ENCODE measurements at regions of chr4 and their contacts with region 1.

Region 1: GRCh38 chr4:181528570-181529184 is 714.5 kb upstream of the TENM3 start:
- DNase-seq: peak; percentile 43 to 71
- ATAC-seq: peak; percentile 64 to 81 (median 66)
- H3K4me3 ChIP-seq: no peak overlapping the region
- H3K27ac ChIP-seq: no peak overlapping the region
- H3K4me1 ChIP-seq: no peaks in the 10 kb centered on the region
- H3K27me3 ChIP-seq: peaks cover 0 to 4% (median 0%) of the 10 kb centered on the region in 3 donors
- CTCF ChIP-seq: peak; percentile 84

Region 2: DNA sequence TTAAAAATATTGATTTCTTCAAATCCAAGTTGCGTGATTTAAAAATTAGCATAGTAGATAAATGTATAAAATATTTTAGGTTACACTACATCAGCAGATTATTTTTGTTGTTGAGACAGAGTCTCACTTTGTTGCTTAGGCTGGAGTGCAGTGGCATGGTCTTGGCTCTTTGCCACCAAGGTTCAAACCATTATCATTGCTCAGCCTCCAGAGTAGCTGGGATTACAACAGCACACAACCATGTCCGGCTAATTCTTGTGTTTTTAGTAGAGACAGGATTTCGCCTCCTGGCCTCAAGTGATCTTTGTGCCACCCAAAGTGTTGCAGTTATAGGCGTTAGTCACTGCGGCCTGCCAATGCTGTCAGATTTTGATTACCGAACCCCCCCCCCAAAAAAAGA is 675.9 kb before region 1 on chr4:
- intact Hi-C with region 1: no loop called
- DNase-seq: no peak
- ATAC-seq: no peak
- H3K4me3 ChIP-seq: no peak overlapping the region
- H3K27ac ChIP-seq: no peak overlapping the region
- H3K4me1 ChIP-seq: no peaks in the 10 kb centered on the region
- H3K27me3 ChIP-seq: no peaks in the 10 kb centered on the region
- CTCF ChIP-seq: no peak

Region 3: GRCh38 chr4:181301735-181302710 is 226.7 kb before region 1 on chr4:
- intact Hi-C with region 1: loop called (anchors 2 to 5 kb)
- DNase-seq: peak; percentile 17 to 59
- ATAC-seq: peak in 1 of 4 donors; percentile 61
- H3K4me3 ChIP-seq: no peak overlapping the region
- H3K27ac ChIP-seq: no peak overlapping the region
- H3K4me1 ChIP-seq: peaks cover 6% of the 10 kb centered on the region
- H3K27me3 ChIP-seq: no peaks in the 10 kb centered on the region
- CTCF ChIP-seq: peak; percentile 58

Region 4: GRCh38 chr4:181372014-181372413 is 156.7 kb before region 1 on chr4:
- intact Hi-C with region 1: no loop called
- DNase-seq: no peak
- ATAC-seq: no peak
- H3K4me3 ChIP-seq: no peak overlapping the region
- H3K27ac ChIP-seq: no peak overlapping the region
- H3K4me1 ChIP-seq: no peaks in the 10 kb centered on the region
- H3K27me3 ChIP-seq: no peaks in the 10 kb centered on the region
- CTCF ChIP-seq: no peak

Measured in psoas muscle (tissue), 8 donors.